MCF 10A (cell line): ENCODE measurements at regions of chr5 and their contacts with region 1.

Region 1: GRCh38 chr5:43105369-43106289 is 15.1 kb upstream of the ZNF131 start:
- DNase-seq: peak; percentile 94
- H3K4me3 Mint-ChIP-seq: peak overlapping the region; percentile 78
- H3K27ac Mint-ChIP-seq: peak overlapping the region; percentile 79
- H3K4me1 Mint-ChIP-seq: peaks cover 12% of the 10 kb centered on the region
- H3K27me3 Mint-ChIP-seq: no peaks in the 10 kb centered on the region
- CTCF ChIP-seq: peak; percentile 99

Region 2: DNA sequence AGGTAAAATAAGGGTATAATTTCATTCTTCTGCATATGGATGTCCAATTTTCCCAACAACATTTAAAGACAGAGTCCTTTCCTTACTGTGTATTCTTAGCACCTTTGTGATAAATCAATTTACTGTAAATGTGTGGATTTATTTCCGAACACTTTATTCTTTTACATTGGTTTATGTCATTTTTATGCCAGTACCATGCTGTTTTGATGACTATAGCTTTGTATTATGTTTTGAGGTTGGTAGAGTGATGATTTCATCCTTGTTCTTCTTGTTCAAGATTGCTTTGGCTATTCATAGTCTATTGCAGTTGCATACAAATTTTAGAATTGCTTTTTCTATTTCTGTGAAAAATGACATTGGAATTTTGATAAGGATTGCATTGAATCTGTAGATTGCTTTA is 402.4 kb before region 1 on chr5:
- CTCF ChIA-PET with region 1: no interaction called
- POLR2A ChIA-PET with region 1: no interaction called
- intact Hi-C with region 1: no loop called
- DNase-seq: no peak
- H3K4me3 Mint-ChIP-seq: no peak overlapping the region
- H3K27ac Mint-ChIP-seq: no peak overlapping the region
- H3K4me1 Mint-ChIP-seq: no peaks in the 10 kb centered on the region
- H3K27me3 Mint-ChIP-seq: no peaks in the 10 kb centered on the region
- CTCF ChIP-seq: no peak

Region 3: DNA sequence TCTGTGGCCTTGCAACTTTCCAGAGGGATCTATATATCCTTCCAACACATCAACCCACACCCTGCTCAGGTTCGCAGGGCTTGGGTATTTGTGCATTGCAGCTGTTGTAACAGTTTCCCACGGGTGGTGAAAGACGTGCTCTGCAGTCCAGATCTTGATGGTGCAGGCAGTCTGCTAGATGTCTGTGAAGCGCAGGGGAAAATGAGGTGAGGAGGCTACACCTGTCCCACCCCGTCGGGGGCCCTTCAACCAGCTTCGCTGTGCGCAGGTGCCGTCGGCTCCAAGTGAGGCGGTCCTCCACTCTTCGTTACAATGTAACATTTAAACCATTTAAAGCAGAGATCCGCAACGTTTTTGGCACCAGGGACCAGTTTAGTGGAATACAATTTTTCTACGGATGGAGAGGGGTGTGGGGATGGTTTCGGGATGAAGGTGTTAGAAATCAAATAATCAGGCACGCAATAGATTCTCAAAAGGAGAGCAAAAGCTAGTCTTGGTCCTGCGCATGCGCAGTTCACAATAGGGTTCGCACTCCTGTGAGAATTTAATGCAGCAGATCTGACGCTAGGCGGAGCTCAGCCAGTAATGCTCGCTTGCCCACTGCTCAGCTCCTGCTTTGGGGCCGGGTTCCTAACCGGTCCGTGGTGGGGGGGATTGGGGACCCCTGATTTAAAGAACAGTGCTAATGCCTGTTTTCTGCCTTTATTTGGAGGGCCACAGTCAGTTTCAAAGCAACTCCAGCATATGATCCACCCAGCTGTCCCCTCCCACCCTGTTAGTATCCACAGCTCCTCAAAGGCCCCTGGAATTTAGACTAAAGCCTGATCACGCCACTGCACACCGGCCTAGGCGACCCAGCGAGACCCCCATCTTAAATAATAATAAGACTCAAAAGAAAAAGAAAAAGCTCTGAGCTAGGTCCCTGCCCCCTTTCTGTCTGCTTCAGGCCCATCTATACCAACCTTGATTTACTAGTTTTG is 196.8 kb before region 1 on chr5:
- CTCF ChIA-PET with region 1: interaction called, 139 read pairs
- POLR2A ChIA-PET with region 1: no interaction called
- intact Hi-C with region 1: loop called (anchors 1 kb)
- DNase-seq: peak; percentile 92
- H3K4me3 Mint-ChIP-seq: peak overlapping the region; percentile 80
- H3K27ac Mint-ChIP-seq: no peak overlapping the region
- H3K4me1 Mint-ChIP-seq: peaks cover 4% of the 10 kb centered on the region
- H3K27me3 Mint-ChIP-seq: no peaks in the 10 kb centered on the region
- CTCF ChIP-seq: peak; percentile 82

Region 4: GRCh38 chr5:43040287-43041098 is 65.1 kb before region 1 on chr5 and contains the start of gene ANXA2R:
- CTCF ChIA-PET with region 1: interaction called, 6 read pairs
- POLR2A ChIA-PET with region 1: interaction called, 4 read pairs
- intact Hi-C with region 1: loop called (anchors 1 kb)
- DNase-seq: no peak
- H3K4me3 Mint-ChIP-seq: peak within 1 kb of the TSS; percentile 88
- H3K27ac Mint-ChIP-seq: peak within 1 kb of the TSS; percentile 95
- H3K4me1 Mint-ChIP-seq: no peaks in the 10 kb centered on the region
- H3K27me3 Mint-ChIP-seq: no peaks in the 10 kb centered on the region
- CTCF ChIP-seq: no peak
- total RNA-seq, gene ANXA2R: 0.98 and 1.3 TPM in 2 replicates

Region 5: GRCh38 chr5:43073597-43074546 is 31.8 kb before region 1 on chr5:
- CTCF ChIA-PET with region 1: interaction called, 12 read pairs
- POLR2A ChIA-PET with region 1: no interaction called
- intact Hi-C with region 1: loop called (anchors 1 kb)
- DNase-seq: peak; percentile 66
- H3K4me3 Mint-ChIP-seq: no peak overlapping the region
- H3K27ac Mint-ChIP-seq: no peak overlapping the region
- H3K4me1 Mint-ChIP-seq: peaks cover 38% of the 10 kb centered on the region
- H3K27me3 Mint-ChIP-seq: no peaks in the 10 kb centered on the region
- CTCF ChIP-seq: peak; percentile 48

Region 6: GRCh38 chr5:43120720-43121564 is 15.3 kb after region 1 on chr5 and contains the start of gene ZNF131:
- CTCF ChIA-PET with region 1: interaction called, 126 read pairs
- POLR2A ChIA-PET with region 1: interaction called, 36 read pairs
- intact Hi-C with region 1: no loop called
- DNase-seq: peak; percentile 96
- H3K4me3 Mint-ChIP-seq: peak within 1 kb of the TSS; percentile 92
- H3K27ac Mint-ChIP-seq: peak within 1 kb of the TSS; percentile 90
- H3K4me1 Mint-ChIP-seq: peaks cover 5% of the 10 kb centered on the region
- H3K27me3 Mint-ChIP-seq: no peaks in the 10 kb centered on the region
- CTCF ChIP-seq: no peak
- total RNA-seq, gene ZNF131: 41.3 and 42.4 TPM in 2 replicates

Region 7: DNA sequence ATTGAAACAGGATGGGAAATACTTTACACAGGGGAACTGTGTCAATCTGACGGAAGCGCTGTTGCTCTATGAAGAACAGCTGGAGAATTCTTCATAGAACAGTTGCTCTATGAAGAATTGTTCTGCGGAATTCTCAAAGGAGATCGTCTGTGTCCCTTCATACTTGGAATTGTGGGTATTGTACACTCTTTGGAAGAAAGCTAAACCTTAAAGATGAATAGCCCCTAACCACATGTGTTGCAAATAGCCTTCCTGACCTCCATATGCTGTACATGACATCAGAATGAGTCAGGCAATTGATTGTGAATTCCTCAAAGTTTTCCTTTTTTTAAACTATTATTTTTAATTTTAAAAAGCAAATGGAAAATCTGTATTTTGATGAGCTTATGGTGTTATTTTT is 102.0 kb after region 1 on chr5:
- CTCF ChIA-PET with region 1: no interaction called
- POLR2A ChIA-PET with region 1: no interaction called
- intact Hi-C with region 1: loop called (anchors 5 kb)
- DNase-seq: no peak
- H3K4me3 Mint-ChIP-seq: no peak overlapping the region
- H3K27ac Mint-ChIP-seq: no peak overlapping the region
- H3K4me1 Mint-ChIP-seq: peaks cover 5% of the 10 kb centered on the region
- H3K27me3 Mint-ChIP-seq: peaks cover 17% of the 10 kb centered on the region
- CTCF ChIP-seq: no peak

Region 8: DNA sequence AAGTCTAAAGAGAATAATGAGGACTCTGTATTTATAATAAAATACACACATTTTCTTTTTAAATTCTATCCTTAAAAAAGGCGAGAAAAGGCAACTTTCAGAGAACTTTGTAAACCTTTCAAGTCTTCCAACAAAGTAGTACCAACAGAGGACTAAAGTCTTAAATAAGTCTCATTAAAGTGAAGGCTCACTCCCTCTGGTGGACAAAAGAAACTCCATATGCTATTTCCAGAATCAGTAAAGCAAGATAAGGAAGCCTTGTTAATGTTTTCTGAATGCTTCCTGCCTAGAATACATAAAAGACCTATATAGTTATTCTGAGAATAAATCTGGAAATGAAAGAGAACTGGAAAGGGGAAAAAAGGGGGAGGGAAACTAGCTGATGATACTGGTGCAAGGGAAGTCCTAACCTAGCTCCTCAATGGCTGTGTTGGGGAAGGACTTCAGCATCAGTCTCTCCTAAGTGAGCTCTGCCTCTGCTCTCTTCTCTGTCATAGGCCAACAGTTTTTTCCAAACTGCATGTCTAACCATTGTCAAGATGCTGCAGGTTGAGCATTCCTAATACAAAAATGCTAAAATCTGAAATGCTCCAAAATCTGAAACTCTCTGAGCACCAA is 200.4 kb after region 1 on chr5:
- CTCF ChIA-PET with region 1: interaction called, 9 read pairs
- POLR2A ChIA-PET with region 1: no interaction called
- intact Hi-C with region 1: loop called (anchors 5 kb)
- DNase-seq: peak; percentile 68
- H3K4me3 Mint-ChIP-seq: no peak overlapping the region
- H3K27ac Mint-ChIP-seq: peak overlapping the region; percentile 54
- H3K4me1 Mint-ChIP-seq: peaks cover 50% of the 10 kb centered on the region
- H3K27me3 Mint-ChIP-seq: no peaks in the 10 kb centered on the region
- CTCF ChIP-seq: peak; percentile 69

Region 9: DNA sequence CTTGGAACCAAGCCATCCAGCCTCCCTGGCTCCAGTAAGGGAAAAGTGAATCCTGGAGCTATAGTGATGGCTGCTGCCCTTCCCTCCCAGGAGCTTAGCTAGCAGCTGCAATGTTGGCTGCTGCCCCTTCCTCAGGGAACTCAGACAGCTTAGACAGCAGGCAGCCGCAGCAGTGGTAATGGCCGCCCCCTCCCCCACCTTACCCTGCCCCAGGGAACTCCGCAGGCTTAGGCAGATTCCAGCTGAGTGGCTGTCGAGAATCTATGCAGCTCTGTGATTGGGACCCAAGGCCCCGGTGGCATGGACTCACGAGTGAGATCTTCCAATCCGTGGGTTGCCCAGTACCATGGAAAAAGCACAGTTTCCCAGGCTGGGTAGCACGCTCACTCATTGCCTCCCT is 875.9 kb after region 1 on chr5:
- CTCF ChIA-PET with region 1: no interaction called
- POLR2A ChIA-PET with region 1: no interaction called
- intact Hi-C with region 1: no loop called
- DNase-seq: no peak
- H3K4me3 Mint-ChIP-seq: no peak overlapping the region
- H3K27ac Mint-ChIP-seq: no peak overlapping the region
- H3K4me1 Mint-ChIP-seq: no peaks in the 10 kb centered on the region
- H3K27me3 Mint-ChIP-seq: no peaks in the 10 kb centered on the region
- CTCF ChIP-seq: no peak